ENCODE measurements at regions of chr1 and their contacts with region 1.

Region 1: DNA sequence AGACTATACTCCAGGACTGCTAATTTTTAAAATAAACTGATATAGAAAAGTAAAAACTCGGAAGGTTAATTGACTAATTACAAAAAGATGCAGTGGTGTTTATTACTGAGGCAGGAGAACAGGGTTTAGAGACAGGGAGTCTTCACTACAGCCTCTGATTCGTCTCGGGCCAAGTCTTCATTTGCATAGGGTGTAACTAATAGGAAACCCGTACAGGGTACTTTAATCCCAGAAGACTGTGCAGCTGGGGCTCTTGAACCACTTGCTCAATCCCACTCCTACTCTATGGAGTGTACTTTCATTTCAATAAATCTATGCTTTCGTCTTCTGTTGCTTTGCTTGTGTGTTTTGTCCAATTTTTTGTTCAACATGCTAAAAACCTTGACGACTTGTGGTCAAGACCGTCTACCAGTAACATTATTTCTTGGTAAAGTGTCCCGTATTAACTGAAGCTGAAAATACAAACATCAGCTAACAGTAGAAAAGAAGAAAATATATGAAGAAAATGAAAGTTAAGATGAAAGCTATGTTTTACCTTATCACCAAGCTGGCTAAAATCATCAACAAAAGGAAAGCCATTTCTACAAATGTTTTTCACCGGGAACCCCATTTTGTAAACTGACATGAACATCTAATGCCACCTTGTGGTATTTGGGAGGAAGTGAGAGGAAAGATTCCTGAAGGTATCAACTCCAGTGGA is 8.0 kb downstream of the SDHB start:
- DNase-seq: peak; percentile 67
- H3K4me3 Mint-ChIP-seq: peak overlapping the region; percentile 24
- H3K27ac Mint-ChIP-seq: peak overlapping the region; percentile 63
- H3K4me1 Mint-ChIP-seq: peaks cover 17% of the 10 kb centered on the region
- H3K27me3 Mint-ChIP-seq: no peaks in the 10 kb centered on the region

Region 2: DNA sequence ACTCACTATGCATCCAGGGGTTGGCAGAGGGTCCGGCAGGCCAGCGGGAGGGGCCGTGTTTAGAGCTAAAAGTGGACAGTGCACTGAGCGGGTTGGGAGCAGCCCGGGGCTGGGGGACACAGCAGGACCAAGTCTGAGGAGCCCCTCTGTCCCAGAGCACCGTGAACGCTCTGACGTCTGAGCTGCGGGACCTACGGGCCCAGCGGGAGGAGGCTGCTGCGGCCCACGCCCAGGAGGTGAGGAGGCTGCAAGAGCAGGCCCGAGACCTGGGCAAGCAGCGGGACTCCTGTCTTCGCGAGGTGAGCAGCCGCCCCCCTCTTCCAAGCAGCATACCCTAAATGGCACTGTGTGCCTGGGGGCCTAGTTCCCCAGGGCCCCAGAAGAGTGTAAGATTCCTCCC is 91.2 kb before region 1 on chr1:
- intact Hi-C with region 1: loop called (anchors 5 kb)
- DNase-seq: no peak
- H3K4me3 Mint-ChIP-seq: no peak overlapping the region
- H3K27ac Mint-ChIP-seq: no peak overlapping the region
- H3K4me1 Mint-ChIP-seq: no peaks in the 10 kb centered on the region
- H3K27me3 Mint-ChIP-seq: no peaks in the 10 kb centered on the region

Region 3: DNA sequence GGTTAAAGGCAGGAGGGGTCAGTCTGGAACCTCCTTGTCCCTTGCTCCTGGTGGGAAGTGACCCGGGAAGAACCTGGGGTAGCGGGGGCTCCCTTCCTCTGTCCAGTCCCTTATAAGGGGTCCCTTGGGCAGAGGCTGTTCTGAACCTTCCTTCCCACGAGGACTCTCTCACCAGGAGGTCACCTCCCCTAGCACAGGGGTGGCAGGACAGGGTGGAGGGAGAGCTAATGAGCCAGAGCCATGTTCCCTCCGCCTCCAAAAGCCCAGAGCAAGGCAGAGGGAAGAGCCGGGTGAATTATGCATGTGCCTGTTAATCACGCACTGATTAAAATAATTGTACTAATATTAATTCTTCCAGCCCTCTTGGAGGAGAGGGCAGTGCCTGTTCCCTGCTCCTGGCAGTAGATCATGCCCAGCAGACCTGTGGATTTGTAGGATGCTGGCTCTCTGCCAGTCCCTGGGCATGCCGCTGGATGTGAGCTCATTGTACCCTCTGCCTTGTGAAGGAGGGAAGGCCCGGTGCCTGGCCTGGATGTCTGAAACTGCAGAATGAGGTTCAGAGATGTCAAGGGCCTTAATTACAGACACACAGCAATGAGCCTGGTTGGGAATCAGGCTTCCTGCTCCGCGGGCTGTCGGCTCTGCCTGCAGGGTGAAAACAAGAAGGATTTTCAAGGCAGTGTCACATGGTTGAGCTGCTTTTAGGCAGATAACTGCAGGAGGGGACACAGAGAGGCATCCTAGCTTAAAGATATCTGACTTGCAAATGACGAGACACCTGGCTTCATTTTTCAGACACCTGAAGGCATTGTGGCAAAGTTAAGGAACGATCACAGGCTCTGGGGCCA is 1130.0 kb after region 1 on chr1:
- intact Hi-C with region 1: no loop called
- DNase-seq: no peak
- H3K4me3 Mint-ChIP-seq: no peak overlapping the region
- H3K27ac Mint-ChIP-seq: no peak overlapping the region
- H3K4me1 Mint-ChIP-seq: no peaks in the 10 kb centered on the region
- H3K27me3 Mint-ChIP-seq: peaks cover 10% of the 10 kb centered on the region

Measured in activated CD4-positive, alpha-beta T cell treated with anti-CD3 and anti-CD28 coated beads, Interleukin-2, amount 10 ng/mL, durations not matched to agents 24 days and 14 days (primary cell).